GM12878 (cell line): ENCODE measurements at regions of chr4 and their contacts with region 1.

Region 1: DNA sequence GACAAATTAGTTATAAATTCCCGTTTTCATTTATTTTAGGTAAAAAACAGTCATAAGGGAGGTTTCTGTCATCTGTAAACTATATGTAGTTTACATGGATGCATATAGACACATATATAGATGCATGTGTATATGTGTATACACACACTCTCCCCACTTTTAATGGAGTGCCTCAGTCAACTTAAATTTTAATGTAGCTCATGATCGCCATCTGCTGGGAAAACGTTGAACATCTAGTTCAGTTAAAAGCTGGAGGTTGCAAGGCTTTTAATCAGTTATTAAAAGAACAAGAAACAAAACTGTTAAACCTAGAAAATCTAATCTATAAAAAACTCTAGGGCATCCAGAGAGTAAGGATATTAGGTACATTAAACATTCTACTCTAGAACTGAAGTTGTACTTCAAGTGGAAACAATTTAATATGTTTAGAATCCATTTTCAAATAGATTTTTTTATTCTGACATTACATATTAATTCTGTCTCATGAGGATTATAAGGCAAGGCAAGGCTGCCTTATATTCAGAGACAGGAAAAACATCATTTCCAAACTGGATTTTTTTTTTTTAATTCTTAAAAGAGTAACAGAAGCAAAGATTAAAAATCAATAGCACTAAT is 122.6 kb downstream of the SHISA3 start:
- DNase-seq: peak; percentile 19
- ATAC-seq: peak; percentile 88
- H3K4me3 ChIP-seq: no peak overlapping the region
- H3K27ac ChIP-seq: no peak overlapping the region
- H3K4me1 ChIP-seq: peaks cover 9% of the 10 kb centered on the region
- H3K27me3 ChIP-seq: no peaks in the 10 kb centered on the region
- CTCF ChIP-seq: peak; percentile 41 to 59 (median 45); a peak in 5 of 6 replicates
- EP300 ChIP-seq: no peak
- POLR2A ChIP-seq: no peak
- RAD21 ChIP-seq: peak; percentile 82

Region 2: GRCh38 chr4:41957634-41958033 is 562.3 kb before region 1 on chr4:
- CTCF ChIA-PET with region 1: interaction called, 4 read pairs
- POLR2A ChIA-PET with region 1: no interaction called
- RAD21 ChIA-PET with region 1: interaction called, 5 read pairs
- SMC1A ChIA-PET with region 1: no interaction called
- in situ Hi-C with region 1: loop called (anchors 10 kb)
- intact Hi-C with region 1: no loop called
- DNase-seq: peak; percentile 20
- ATAC-seq: peak; percentile 76
- H3K4me3 ChIP-seq: no peak overlapping the region
- H3K27ac ChIP-seq: no peak overlapping the region
- H3K4me1 ChIP-seq: no peaks in the 10 kb centered on the region
- H3K27me3 ChIP-seq: no peaks in the 10 kb centered on the region
- CTCF ChIP-seq: peak; percentile 43 to 59 (median 57); a peak in 5 of 6 replicates
- EP300 ChIP-seq: no peak
- POLR2A ChIP-seq: no peak
- RAD21 ChIP-seq: peak; percentile 74

Region 3: DNA sequence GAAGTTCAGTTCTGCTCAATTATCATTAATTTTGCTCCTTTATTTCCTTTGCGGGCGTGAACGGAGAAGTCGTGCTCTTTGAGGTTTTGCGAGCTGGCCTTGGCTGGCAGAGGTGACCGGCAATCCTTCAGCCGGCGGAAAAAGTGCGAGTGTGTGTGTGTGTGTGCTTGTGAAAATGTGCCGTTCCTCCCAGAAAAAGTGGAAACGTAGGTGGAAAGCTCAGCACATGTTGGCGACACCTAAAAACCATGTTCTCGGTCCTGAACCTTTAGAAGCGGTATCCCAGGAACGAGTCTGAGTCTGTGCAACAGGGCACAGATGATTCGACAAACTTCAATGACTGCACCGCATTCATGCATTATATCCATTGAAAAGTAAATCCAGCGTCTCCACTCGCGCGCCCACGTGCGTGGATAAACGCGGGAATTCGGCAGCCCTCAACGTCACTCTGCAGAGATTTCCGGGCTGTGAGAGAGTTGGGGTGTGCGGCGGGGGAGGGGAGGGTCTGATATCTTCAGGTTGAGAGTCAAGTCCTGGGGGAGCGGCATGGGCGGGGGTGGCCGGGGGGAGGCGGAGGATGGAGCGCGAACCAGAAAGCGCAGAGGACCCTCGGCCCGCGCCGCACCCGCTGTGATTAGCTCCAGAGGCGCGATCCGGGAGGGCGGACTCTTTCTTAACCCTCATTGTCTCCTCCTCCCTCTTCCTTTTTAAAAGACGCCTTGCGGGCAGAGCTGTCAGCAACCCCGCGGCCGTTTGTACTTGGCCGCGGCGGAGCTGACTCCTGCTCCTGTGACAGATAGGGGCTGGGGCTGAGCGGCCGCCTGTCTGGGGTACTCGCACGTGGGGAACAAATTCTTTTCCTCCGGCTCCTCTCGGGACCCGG is 122.9 kb before region 1 on chr4 and contains the start of gene SHISA3:
- CTCF ChIA-PET with region 1: interaction called, 6 read pairs
- POLR2A ChIA-PET with region 1: no interaction called
- RAD21 ChIA-PET with region 1: interaction called, 5 read pairs
- SMC1A ChIA-PET with region 1: interaction called, 21 read pairs
- in situ Hi-C with region 1: no loop called
- intact Hi-C with region 1: no loop called
- DNase-seq: no peak
- ATAC-seq: peak; percentile 52
- H3K4me3 ChIP-seq: peak within 1 kb of the TSS; percentile 83
- H3K27ac ChIP-seq: no peak within 1 kb of the TSS
- H3K4me1 ChIP-seq: peaks cover 16% of the 10 kb centered on the region
- H3K27me3 ChIP-seq: peaks cover 2 to 10% of the 10 kb centered on the region in 2 experiments
- CTCF ChIP-seq: no peak
- EP300 ChIP-seq: no peak
- POLR2A ChIP-seq: no peak
- RAD21 ChIP-seq: no peak
- polyA plus RNA-seq, gene SHISA3: 1.9 to 4.6 TPM

Region 4: GRCh38 chr4:42417550-42417949 is 102.4 kb before region 1 on chr4:
- CTCF ChIA-PET with region 1: interaction called, 21 read pairs
- POLR2A ChIA-PET with region 1: no interaction called
- RAD21 ChIA-PET with region 1: interaction called, 3 read pairs
- SMC1A ChIA-PET with region 1: no interaction called
- in situ Hi-C with region 1: no loop called
- intact Hi-C with region 1: no loop called
- DNase-seq: no peak
- ATAC-seq: no peak
- H3K4me3 ChIP-seq: no peak overlapping the region
- H3K27ac ChIP-seq: no peak overlapping the region
- H3K4me1 ChIP-seq: no peaks in the 10 kb centered on the region
- H3K27me3 ChIP-seq: no peaks in the 10 kb centered on the region
- CTCF ChIP-seq: no peak
- EP300 ChIP-seq: no peak
- POLR2A ChIP-seq: no peak
- RAD21 ChIP-seq: no peak

Region 5: DNA sequence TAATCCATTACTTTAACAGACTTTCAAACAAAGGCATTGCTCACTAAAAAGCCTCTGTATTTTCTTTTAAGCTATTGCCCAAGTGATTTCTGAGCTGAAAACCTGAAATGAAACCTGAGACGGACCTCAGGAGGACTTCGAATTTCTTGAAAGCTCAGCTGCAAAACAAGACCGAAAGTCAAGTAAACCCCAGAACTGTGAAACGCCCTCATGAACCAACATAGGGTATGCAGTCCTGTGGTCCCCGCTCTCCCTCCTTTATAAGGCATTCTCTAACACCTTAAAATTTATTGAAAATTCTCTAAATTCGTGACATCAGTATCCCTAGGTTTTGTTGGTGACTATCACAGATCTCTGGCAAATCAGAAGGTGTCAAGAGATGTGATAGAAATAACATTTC is 30.8 kb before region 1 on chr4:
- CTCF ChIA-PET with region 1: interaction called, 6 read pairs
- POLR2A ChIA-PET with region 1: no interaction called
- RAD21 ChIA-PET with region 1: interaction called, 14 read pairs
- SMC1A ChIA-PET with region 1: interaction called, 18 read pairs
- in situ Hi-C with region 1: no loop called
- intact Hi-C with region 1: no loop called
- DNase-seq: peak; percentile 62
- ATAC-seq: peak; percentile 90
- H3K4me3 ChIP-seq: peak overlapping the region; percentile 62
- H3K27ac ChIP-seq: peak overlapping the region; percentile 92
- H3K4me1 ChIP-seq: peaks cover 32% of the 10 kb centered on the region
- H3K27me3 ChIP-seq: no peaks in the 10 kb centered on the region
- CTCF ChIP-seq: no peak
- EP300 ChIP-seq: peak in 1 of 2 experiments; percentile 57; a peak in 2 of 4 replicates
- POLR2A ChIP-seq: no peak
- RAD21 ChIP-seq: no peak

Region 6: GRCh38 chr4:42690537-42690936 is 170.6 kb after region 1 on chr4:
- CTCF ChIA-PET with region 1: no interaction called
- POLR2A ChIA-PET with region 1: no interaction called
- RAD21 ChIA-PET with region 1: no interaction called
- SMC1A ChIA-PET with region 1: no interaction called
- in situ Hi-C with region 1: no loop called
- intact Hi-C with region 1: no loop called
- DNase-seq: no peak
- ATAC-seq: no peak
- H3K4me3 ChIP-seq: no peak overlapping the region
- H3K27ac ChIP-seq: no peak overlapping the region
- H3K4me1 ChIP-seq: no peaks in the 10 kb centered on the region
- H3K27me3 ChIP-seq: no peaks in the 10 kb centered on the region
- CTCF ChIP-seq: no peak
- EP300 ChIP-seq: no peak
- POLR2A ChIP-seq: no peak
- RAD21 ChIP-seq: no peak